ENCODE measurements at regions of chr11 and their contacts with region 1.

Region 1: GRCh38 chr11:10735481-10736475 is 15.3 kb upstream of the CTR9 start:
- DNase-seq: peak; percentile 35
- ATAC-seq: peak; percentile 100
- H3K4me3 ChIP-seq: no peak overlapping the region
- H3K27ac ChIP-seq: no peak overlapping the region
- H3K4me1 ChIP-seq: peaks cover 3% of the 10 kb centered on the region; the same call in 1 of the 2 replicates
- H3K27me3 ChIP-seq: no peaks in the 10 kb centered on the region
- CTCF ChIP-seq: peak; percentile 93 to 99 (median 95)
- EP300 ChIP-seq: no peak
- POLR2A ChIP-seq: no peak
- RAD21 ChIP-seq: peak; percentile 92

Region 2: GRCh38 chr11:10400856-10401255 is 334.9 kb before region 1 on chr11:
- CTCF ChIA-PET with region 1: interaction called, 31 read pairs
- POLR2A ChIA-PET with region 1: no interaction called
- RAD21 ChIA-PET with region 1: interaction called, 12 read pairs
- SMC1A ChIA-PET with region 1: interaction called, 10 read pairs
- in situ Hi-C with region 1: loop called (anchors 5 kb)
- intact Hi-C with region 1: loop called (anchors 1 kb)
- DNase-seq: no peak
- ATAC-seq: peak; percentile 27; the same call in 1 of the 3 replicates
- H3K4me3 ChIP-seq: no peak overlapping the region
- H3K27ac ChIP-seq: no peak overlapping the region
- H3K4me1 ChIP-seq: no peaks in the 10 kb centered on the region
- H3K27me3 ChIP-seq: no peaks in the 10 kb centered on the region
- CTCF ChIP-seq: no peak
- EP300 ChIP-seq: no peak
- POLR2A ChIP-seq: no peak
- RAD21 ChIP-seq: no peak

Region 3: GRCh38 chr11:10413268-10413667 is 322.5 kb before region 1 on chr11:
- CTCF ChIA-PET with region 1: interaction called, 34 read pairs
- POLR2A ChIA-PET with region 1: no interaction called
- RAD21 ChIA-PET with region 1: interaction called, 15 read pairs
- SMC1A ChIA-PET with region 1: interaction called, 22 read pairs
- in situ Hi-C with region 1: loop called (anchors 5 kb)
- intact Hi-C with region 1: loop called (anchors 1 kb)
- DNase-seq: no peak
- ATAC-seq: peak; percentile 94
- H3K4me3 ChIP-seq: no peak overlapping the region
- H3K27ac ChIP-seq: no peak overlapping the region
- H3K4me1 ChIP-seq: peaks cover 7% of the 10 kb centered on the region; the same call in 1 of the 2 replicates
- H3K27me3 ChIP-seq: no peaks in the 10 kb centered on the region; a peak in 1 of 4 replicates
- CTCF ChIP-seq: peak; percentile 44 to 50 (median 49); a peak in 4 of 6 replicates
- EP300 ChIP-seq: no peak
- POLR2A ChIP-seq: no peak
- RAD21 ChIP-seq: peak; percentile 89

Region 4: DNA sequence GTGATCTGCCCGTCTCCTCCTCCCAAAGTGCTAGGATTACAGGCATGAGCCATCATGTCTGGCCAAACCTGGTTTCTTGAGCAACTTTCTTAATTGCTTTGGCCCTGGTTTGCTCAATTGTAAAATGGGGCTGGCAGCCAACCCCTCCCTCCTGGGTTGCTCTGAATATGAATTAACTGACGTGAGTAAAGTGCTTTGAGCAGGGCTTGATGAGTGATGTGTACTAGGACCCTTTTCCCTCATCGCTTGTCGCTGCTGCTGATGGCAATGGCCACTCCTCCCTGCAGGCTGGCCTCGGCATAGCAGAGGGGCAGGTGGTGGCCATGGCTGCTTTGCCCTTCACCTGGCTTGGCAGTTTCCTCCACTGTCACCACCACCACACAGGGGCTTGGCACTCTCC is 236.3 kb before region 1 on chr11:
- CTCF ChIA-PET with region 1: no interaction called
- POLR2A ChIA-PET with region 1: no interaction called
- RAD21 ChIA-PET with region 1: no interaction called
- SMC1A ChIA-PET with region 1: no interaction called
- in situ Hi-C with region 1: no loop called
- intact Hi-C with region 1: no loop called
- DNase-seq: no peak
- ATAC-seq: no peak
- H3K4me3 ChIP-seq: no peak overlapping the region
- H3K27ac ChIP-seq: no peak overlapping the region
- H3K4me1 ChIP-seq: no peaks in the 10 kb centered on the region
- H3K27me3 ChIP-seq: no peaks in the 10 kb centered on the region
- CTCF ChIP-seq: no peak
- EP300 ChIP-seq: no peak
- POLR2A ChIP-seq: no peak
- RAD21 ChIP-seq: no peak

Region 5: GRCh38 chr11:10540923-10541560 is 194.7 kb before region 1 on chr11 and contains the start of gene RNF141:
- CTCF ChIA-PET with region 1: interaction called, 6 read pairs
- POLR2A ChIA-PET with region 1: no interaction called
- RAD21 ChIA-PET with region 1: no interaction called
- SMC1A ChIA-PET with region 1: interaction called, 4 read pairs
- in situ Hi-C with region 1: no loop called
- intact Hi-C with region 1: loop called (anchors 2 kb)
- DNase-seq: peak; percentile 60
- ATAC-seq: peak; percentile 99
- H3K4me3 ChIP-seq: peak within 1 kb of the TSS; percentile 64
- H3K27ac ChIP-seq: peak within 1 kb of the TSS; percentile 22; the same call in 1 of the 2 replicates
- H3K4me1 ChIP-seq: peaks cover 5% of the 10 kb centered on the region
- H3K27me3 ChIP-seq: peaks cover 0 to 5% of the 10 kb centered on the region in 2 experiments; a peak in 1 of 4 replicates
- CTCF ChIP-seq: peak; percentile 80 to 93 (median 91); a peak in 5 of 6 replicates
- EP300 ChIP-seq: no peak
- POLR2A ChIP-seq: peak; percentile 98
- RAD21 ChIP-seq: peak; percentile 47
- polyA plus RNA-seq, gene RNF141: 21.2 to 36.8 TPM